IMR-90 (cell line): ENCODE measurements at regions of chr4 and their contacts with region 1.

Region 1: DNA sequence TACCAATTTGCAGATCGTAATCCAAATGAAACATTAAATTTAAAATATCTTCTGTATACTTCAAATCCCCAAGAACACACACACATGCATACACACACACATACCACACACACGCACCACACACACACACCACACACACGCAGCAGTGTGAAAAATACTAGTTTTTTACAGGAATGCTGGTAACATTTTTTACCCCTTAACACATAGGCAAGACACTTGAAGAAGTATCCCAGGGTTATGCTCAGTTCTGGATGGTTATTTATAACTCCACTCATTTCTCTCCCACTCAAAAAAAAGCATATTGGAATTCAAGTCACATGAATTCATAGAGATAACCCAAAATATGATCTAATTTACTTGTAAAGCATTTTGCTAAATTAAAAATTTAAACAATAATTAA is 325.5 kb upstream of the SLC7A11 start:
- DNase-seq: peak; percentile 54
- ATAC-seq: peak; percentile 24; the same call in 1 of the 2 replicates
- H3K4me3 ChIP-seq: no peak overlapping the region
- H3K27ac ChIP-seq: no peak overlapping the region
- H3K4me1 ChIP-seq: peaks cover 1% of the 10 kb centered on the region; the same call in 1 of the 2 replicates
- H3K27me3 ChIP-seq: no peaks in the 10 kb centered on the region
- CTCF ChIP-seq: no peak
- POLR2A ChIP-seq: no peak
- RAD21 ChIP-seq: no peak

Region 2: DNA sequence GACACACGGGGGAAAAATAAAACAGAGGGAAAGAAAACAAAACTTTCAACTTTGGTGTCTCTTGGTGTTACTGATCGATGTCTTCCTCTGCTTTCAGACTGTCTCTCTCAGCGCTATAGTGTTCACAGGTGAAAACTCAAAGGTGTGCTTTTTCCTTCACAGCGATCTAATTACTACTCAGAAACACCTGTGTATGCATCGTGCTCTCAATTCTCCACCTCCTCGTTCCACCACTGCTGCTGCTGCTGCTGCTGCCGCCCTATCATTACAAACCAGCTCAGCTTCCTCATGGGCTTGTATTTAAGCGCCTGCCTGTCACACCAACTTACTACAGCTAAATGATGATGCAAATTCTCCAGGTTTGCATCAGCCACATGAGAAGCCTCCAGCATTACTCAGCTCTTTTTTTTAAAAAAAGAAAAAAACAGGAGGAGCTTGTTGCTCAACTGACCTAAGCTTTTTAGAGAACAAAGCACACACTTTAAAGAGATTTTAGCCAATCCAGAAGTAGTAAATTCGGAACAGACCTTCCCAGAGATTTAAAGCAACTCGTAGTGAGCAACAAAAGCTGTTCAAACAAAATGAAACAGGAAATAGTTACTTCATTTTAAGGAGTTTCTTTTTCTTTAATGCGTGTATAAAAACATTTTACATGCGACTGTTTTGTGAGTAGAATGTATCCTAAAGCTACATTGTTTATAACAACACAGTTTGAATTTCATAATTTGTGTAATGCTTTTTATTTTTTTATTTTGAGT is 325.4 kb before region 1 on chr4 and contains the start of gene SLC7A11:
- CTCF ChIA-PET with region 1: no interaction called
- POLR2A ChIA-PET with region 1: no interaction called
- dilution Hi-C with region 1: no loop called
- in situ Hi-C with region 1: no loop called
- intact Hi-C with region 1: loop called (anchors 5 kb)
- DNase-seq: peak; percentile 100
- ATAC-seq: peak; percentile 87
- H3K4me3 ChIP-seq: peak within 1 kb of the TSS; percentile 75
- H3K27ac ChIP-seq: peak within 1 kb of the TSS; percentile 92
- H3K4me1 ChIP-seq: peaks cover 4% of the 10 kb centered on the region; the same call in 1 of the 2 replicates
- H3K27me3 ChIP-seq: no peaks in the 10 kb centered on the region
- CTCF ChIP-seq: 0 out of 2 replicates have a peak, but pooled peaks have one; percentile 3
- POLR2A ChIP-seq: peak; percentile 95
- RAD21 ChIP-seq: peak; percentile 17
- total RNA-seq, gene SLC7A11: 24.7 and 35.6 TPM in 2 replicates